ENCODE measurements at regions of chr3 and their contacts with region 1.

Region 1: DNA sequence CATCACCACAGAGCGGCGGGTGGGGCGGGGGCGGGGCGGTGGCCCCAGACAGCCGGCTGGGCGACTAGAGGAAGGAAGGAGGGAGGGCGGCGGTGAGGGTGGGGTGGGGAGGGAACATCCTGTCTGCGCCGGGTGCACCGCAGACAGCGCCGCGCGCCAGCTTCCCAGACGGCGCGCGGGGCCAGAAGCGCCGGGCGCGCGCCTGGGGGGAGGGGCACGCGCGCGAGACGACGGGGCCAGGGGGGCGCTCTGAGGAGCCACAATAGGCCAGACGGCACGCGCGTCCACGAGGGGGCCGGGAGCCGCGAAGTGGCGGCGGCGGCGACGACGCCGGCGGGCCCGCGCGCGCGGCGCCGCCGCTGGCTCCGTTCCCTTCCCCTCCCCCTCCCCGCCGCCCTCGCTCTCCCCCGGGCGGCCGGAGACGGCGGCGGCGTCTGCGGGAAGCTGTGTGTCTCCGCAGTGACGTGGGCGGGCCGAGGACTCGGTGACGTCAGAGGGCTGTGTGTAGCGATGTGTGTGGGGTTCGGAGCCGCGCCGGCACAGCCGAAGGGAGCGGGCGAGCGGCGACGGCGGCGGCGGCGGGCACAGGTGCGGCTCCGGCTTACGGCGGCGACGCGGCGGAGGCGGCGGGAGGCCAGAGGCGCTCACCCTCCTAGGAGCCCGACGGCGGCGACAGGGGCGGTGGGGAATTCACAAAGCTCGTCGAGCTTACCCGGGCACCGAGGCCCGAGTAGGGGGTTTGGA is at the start of gene SKIL:
- DNase-seq: peak; percentile 100
- H3K4me3 Mint-ChIP-seq: peak within 1 kb of the TSS; percentile 98
- H3K27ac Mint-ChIP-seq: peak within 1 kb of the TSS; percentile 99
- H3K4me1 Mint-ChIP-seq: peaks cover 61% of the 10 kb centered on the region
- H3K27me3 Mint-ChIP-seq: no peaks in the 10 kb centered on the region
- CTCF ChIP-seq: no peak
- total RNA-seq, gene SKIL: 184 and 265 TPM in 2 replicates

Region 2: GRCh38 chr3:170307671-170308403 is 49.5 kb before region 1 on chr3:
- CTCF ChIA-PET with region 1: interaction called, 13 read pairs
- intact Hi-C with region 1: loop called (anchors 1 kb)
- DNase-seq: peak; percentile 62
- H3K4me3 Mint-ChIP-seq: peak overlapping the region; percentile 52
- H3K27ac Mint-ChIP-seq: peak overlapping the region; percentile 96
- H3K4me1 Mint-ChIP-seq: peaks cover 16% of the 10 kb centered on the region
- H3K27me3 Mint-ChIP-seq: no peaks in the 10 kb centered on the region
- CTCF ChIP-seq: no peak

Region 3: DNA sequence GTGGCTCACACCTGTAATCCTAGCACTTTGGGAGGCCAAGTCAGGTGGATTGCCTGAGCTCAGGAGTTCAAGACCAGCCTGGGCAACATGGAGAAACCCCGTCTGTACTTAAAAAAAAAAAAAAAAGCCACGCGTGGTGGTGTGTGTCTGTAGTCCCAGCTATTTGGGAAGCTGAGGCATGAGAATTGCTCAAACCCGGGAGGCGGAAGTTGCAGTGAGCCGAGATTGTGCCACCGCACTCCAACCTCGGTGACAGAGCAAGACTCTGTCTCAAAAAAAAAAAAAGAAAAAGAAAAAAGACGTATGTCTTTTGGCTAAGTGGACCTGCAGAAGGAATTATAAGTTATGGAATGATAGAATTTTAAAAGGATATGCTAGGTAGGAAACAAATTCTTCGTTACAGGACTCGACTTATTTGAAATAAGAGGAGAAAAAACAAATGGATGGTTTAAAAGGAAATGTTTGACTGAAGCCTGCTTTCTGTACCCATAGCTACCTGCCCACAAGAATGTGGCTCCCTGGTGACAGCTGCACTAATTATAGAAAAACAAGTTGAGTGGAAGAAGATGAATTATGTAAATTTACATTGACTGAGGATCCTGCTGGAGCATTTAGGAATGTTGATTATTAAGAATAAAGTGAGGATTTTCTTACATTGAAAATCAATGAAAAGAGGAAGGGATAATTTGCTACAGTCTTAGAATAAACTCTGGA is 35.9 kb before region 1 on chr3:
- CTCF ChIA-PET with region 1: interaction called, 24 read pairs
- intact Hi-C with region 1: loop called (anchors 2 kb)
- DNase-seq: peak; percentile 61
- H3K4me3 Mint-ChIP-seq: peak overlapping the region; percentile 10
- H3K27ac Mint-ChIP-seq: peak overlapping the region; percentile 89
- H3K4me1 Mint-ChIP-seq: peaks cover 48% of the 10 kb centered on the region
- H3K27me3 Mint-ChIP-seq: no peaks in the 10 kb centered on the region
- CTCF ChIP-seq: no peak

Region 4: DNA sequence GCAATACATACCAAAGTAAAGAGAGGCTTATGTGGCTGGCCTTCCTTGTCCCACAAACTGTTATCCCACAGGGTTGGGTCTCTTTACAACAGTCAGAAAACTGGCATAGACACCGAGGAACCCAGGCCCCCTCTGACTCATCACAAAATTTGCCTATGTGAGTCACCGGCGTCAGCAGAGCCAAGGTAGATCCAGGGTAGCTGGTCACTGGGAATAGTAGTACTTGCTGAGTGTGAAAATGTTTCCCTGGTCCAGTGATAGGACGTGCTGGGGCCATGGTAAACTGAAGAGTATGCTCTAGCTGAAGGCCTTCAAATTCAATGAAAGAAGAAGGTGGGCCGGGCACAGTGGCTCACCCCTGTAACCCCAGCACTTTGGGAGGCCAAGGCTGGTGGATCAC is 27.0 kb before region 1 on chr3:
- CTCF ChIA-PET with region 1: interaction called, 9 read pairs
- intact Hi-C with region 1: loop called (anchors 2 kb)
- DNase-seq: peak; percentile 90
- H3K4me3 Mint-ChIP-seq: peak overlapping the region; percentile 65
- H3K27ac Mint-ChIP-seq: peak overlapping the region; percentile 100
- H3K4me1 Mint-ChIP-seq: peaks cover 54% of the 10 kb centered on the region
- H3K27me3 Mint-ChIP-seq: no peaks in the 10 kb centered on the region
- CTCF ChIP-seq: no peak

Measured in Calu3 (cell line).